Mammary epithelial cell (primary cell): ENCODE measurements at regions of chr6 and their contacts with region 1.

Region 1: GRCh38 chr6:70369332-70369950 is 43.9 kb upstream of the FAM135A start:
- DNase-seq: peak; percentile 71
- H3K4me3 ChIP-seq: no peak overlapping the region
- H3K27ac ChIP-seq: no peak overlapping the region
- H3K4me1 ChIP-seq: peaks cover 5% of the 10 kb centered on the region
- H3K27me3 ChIP-seq: peaks cover 31% of the 10 kb centered on the region
- CTCF ChIP-seq: peak; percentile 96

Region 2: DNA sequence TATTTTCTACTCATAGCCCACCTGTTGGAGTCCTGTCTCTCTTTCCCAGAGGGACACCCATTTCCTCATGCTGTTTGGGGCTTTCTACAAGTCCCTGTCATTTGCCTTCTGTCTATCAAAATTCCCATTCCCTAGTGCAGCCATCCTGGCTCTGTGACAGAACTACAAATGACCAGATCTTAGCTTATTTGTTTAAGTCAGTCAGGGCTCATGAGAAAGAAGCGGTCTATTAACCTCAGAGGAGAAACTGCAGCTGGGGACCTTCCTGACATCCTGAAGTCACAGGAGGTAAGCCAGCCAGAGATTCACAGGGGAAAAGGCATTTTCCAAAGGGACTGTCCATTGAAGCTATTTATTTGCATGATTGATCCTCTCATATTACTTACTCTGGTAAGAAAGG is 64.8 kb before region 1 on chr6:
- CTCF ChIA-PET with region 1: interaction called, 23 read pairs
- dilution Hi-C with region 1: no loop called
- in situ Hi-C with region 1: loop called in 1 of 2 experiments (anchors 10 kb)
- intact Hi-C with region 1: no loop called
- DNase-seq: no peak
- H3K4me3 ChIP-seq: no peak overlapping the region
- H3K27ac ChIP-seq: no peak overlapping the region
- H3K4me1 ChIP-seq: no peaks in the 10 kb centered on the region
- H3K27me3 ChIP-seq: peaks cover 51% of the 10 kb centered on the region
- CTCF ChIP-seq: no peak

Region 3: GRCh38 chr6:70315079-70315751 is 54.2 kb before region 1 on chr6:
- CTCF ChIA-PET with region 1: interaction called, 23 read pairs
- dilution Hi-C with region 1: no loop called
- in situ Hi-C with region 1: loop called in 1 of 2 experiments (anchors 5 kb)
- intact Hi-C with region 1: loop called (anchors 1 kb)
- DNase-seq: no peak
- H3K4me3 ChIP-seq: no peak overlapping the region
- H3K27ac ChIP-seq: no peak overlapping the region
- H3K4me1 ChIP-seq: no peaks in the 10 kb centered on the region
- H3K27me3 ChIP-seq: peaks cover 46% of the 10 kb centered on the region
- CTCF ChIP-seq: no peak

Region 4: GRCh38 chr6:70520575-70520974 is 151.1 kb after region 1 on chr6:
- CTCF ChIA-PET with region 1: interaction called, 3 read pairs
- dilution Hi-C with region 1: no loop called
- in situ Hi-C with region 1: no loop called
- intact Hi-C with region 1: loop called (anchors 10 kb)
- DNase-seq: no peak
- H3K4me3 ChIP-seq: no peak overlapping the region
- H3K27ac ChIP-seq: no peak overlapping the region
- H3K4me1 ChIP-seq: no peaks in the 10 kb centered on the region
- H3K27me3 ChIP-seq: no peaks in the 10 kb centered on the region
- CTCF ChIP-seq: peak in 1 of 2 donors; percentile 34

Region 5: GRCh38 chr6:70686548-70687133 is 317.2 kb after region 1 on chr6:
- CTCF ChIA-PET with region 1: no interaction called
- dilution Hi-C with region 1: no loop called
- in situ Hi-C with region 1: no loop called
- intact Hi-C with region 1: loop called (anchors 5 kb)
- DNase-seq: peak; percentile 16
- H3K4me3 ChIP-seq: no peak overlapping the region
- H3K27ac ChIP-seq: no peak overlapping the region
- H3K4me1 ChIP-seq: no peaks in the 10 kb centered on the region
- H3K27me3 ChIP-seq: no peaks in the 10 kb centered on the region
- CTCF ChIP-seq: peak; percentile 55 to 75